A673 (cell line): ENCODE measurements at regions of chr7 and their contacts with region 1.

Region 1: GRCh38 chr7:116588641-116589594 is 64.1 kb downstream of the CAV1 start:
- DNase-seq: peak; percentile 90
- H3K4me3 ChIP-seq: no peak overlapping the region
- H3K27ac ChIP-seq: peak overlapping the region; percentile 55
- H3K4me1 ChIP-seq: peaks cover 71% of the 10 kb centered on the region
- H3K27me3 ChIP-seq: no peaks in the 10 kb centered on the region
- CTCF ChIP-seq: peak; percentile 73

Region 2: GRCh38 chr7:116173051-116174028 is 415.6 kb before region 1 on chr7:
- CTCF ChIA-PET with region 1: interaction called, 5 read pairs
- POLR2A ChIA-PET with region 1: no interaction called
- intact Hi-C with region 1: loop called (anchors 2 kb)
- DNase-seq: peak; percentile 84
- H3K4me3 ChIP-seq: no peak overlapping the region
- H3K27ac ChIP-seq: peak overlapping the region; percentile 3
- H3K4me1 ChIP-seq: peaks cover 4% of the 10 kb centered on the region
- H3K27me3 ChIP-seq: no peaks in the 10 kb centered on the region
- CTCF ChIP-seq: peak; percentile 68

Region 3: DNA sequence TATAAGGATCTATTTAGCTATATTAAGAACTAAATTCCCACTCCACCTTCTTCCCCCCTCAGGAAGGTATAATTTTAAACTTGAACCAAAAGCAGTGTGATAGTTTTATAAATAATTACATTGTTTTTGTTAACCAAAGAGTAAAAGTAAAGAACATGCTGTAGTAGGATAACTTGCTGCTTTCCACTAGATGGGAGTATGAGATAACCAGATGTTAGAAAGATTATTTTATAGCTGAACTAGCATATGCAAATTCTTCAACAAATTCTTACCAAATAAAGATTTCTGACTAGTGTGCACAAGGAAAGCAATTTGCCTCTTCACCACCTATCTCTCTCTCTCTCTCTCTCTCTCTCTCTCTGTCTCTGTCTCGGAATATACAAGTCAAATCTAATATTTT is 346.7 kb before region 1 on chr7:
- CTCF ChIA-PET with region 1: interaction called, 11 read pairs
- POLR2A ChIA-PET with region 1: no interaction called
- intact Hi-C with region 1: loop called (anchors 2 kb)
- DNase-seq: peak; percentile 52
- H3K4me3 ChIP-seq: no peak overlapping the region
- H3K27ac ChIP-seq: peak overlapping the region; percentile 87
- H3K4me1 ChIP-seq: peaks cover 47% of the 10 kb centered on the region
- H3K27me3 ChIP-seq: no peaks in the 10 kb centered on the region
- CTCF ChIP-seq: peak; percentile 45; the same call in 1 of the 2 replicates

Region 4: DNA sequence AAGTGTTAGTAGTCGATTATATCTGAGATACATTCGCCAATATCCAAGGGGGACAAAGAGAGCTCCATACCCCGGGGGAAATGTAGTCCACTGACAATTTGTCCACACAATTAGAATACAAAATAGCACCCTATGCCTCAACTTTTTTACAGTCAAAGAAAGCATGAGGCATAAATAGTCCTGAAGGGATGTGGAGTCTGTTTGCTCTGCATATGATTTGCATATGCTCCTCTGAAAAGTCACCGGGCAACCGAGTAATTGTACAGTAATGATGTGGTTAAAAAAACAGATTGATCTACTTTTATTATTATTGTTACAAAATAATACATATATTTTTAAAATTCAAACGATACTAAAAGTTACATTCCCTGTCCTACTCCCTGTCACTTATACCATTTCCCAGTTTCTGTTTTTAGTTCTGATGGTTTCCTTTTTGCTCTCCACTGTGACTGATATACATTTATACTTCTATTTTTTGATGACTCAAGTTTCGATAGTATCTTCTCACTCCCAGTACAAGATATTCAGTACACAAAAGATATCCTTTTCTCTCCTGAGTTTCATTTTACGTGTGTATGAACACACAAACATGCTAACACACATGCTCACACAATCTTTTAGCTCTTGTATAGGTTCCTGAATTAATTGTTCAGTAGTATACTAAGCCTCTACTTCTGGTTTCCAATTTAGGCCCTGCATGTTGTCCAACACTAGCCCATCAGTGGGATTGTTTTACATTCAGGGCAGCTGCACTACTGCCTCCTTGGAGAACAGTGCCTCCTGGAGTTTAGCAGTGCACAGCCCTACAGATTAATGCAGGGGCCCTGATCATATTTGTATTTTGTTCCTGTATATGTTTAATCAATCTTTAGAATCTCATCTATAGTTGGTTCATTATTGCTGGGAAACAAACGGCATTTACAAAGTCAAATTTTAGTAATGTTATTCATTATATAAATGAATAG is 247.7 kb before region 1 on chr7:
- CTCF ChIA-PET with region 1: no interaction called
- POLR2A ChIA-PET with region 1: no interaction called
- intact Hi-C with region 1: loop called (anchors 10 kb)
- DNase-seq: peak; percentile 78
- H3K4me3 ChIP-seq: peak overlapping the region; percentile 9
- H3K27ac ChIP-seq: peak overlapping the region; percentile 86
- H3K4me1 ChIP-seq: peaks cover 49% of the 10 kb centered on the region
- H3K27me3 ChIP-seq: no peaks in the 10 kb centered on the region
- CTCF ChIP-seq: peak; percentile 73

Region 5: GRCh38 chr7:116525913-116526861 is 62.7 kb before region 1 on chr7:
- CTCF ChIA-PET with region 1: interaction called, 3 read pairs
- POLR2A ChIA-PET with region 1: interaction called, 4 read pairs
- intact Hi-C with region 1: loop called (anchors 2 kb)
- DNase-seq: peak; percentile 90
- H3K4me3 ChIP-seq: peak overlapping the region; percentile 90
- H3K27ac ChIP-seq: peak overlapping the region; percentile 100
- H3K4me1 ChIP-seq: peaks cover 29% of the 10 kb centered on the region
- H3K27me3 ChIP-seq: no peaks in the 10 kb centered on the region
- CTCF ChIP-seq: peak; percentile 58

Region 6: GRCh38 chr7:116652793-116653192 is 63.9 kb after region 1 on chr7:
- CTCF ChIA-PET with region 1: no interaction called
- POLR2A ChIA-PET with region 1: no interaction called
- intact Hi-C with region 1: no loop called
- DNase-seq: no peak
- H3K4me3 ChIP-seq: no peak overlapping the region
- H3K27ac ChIP-seq: no peak overlapping the region
- H3K4me1 ChIP-seq: no peaks in the 10 kb centered on the region
- H3K27me3 ChIP-seq: no peaks in the 10 kb centered on the region
- CTCF ChIP-seq: no peak

Region 7: GRCh38 chr7:116671681-116672595 is 83.0 kb after region 1 on chr7 and contains the start of gene MET:
- CTCF ChIA-PET with region 1: no interaction called
- POLR2A ChIA-PET with region 1: no interaction called
- intact Hi-C with region 1: loop called (anchors 5 kb)
- DNase-seq: peak; percentile 82
- H3K4me3 ChIP-seq: peak within 1 kb of the TSS; percentile 64
- H3K27ac ChIP-seq: no peak within 1 kb of the TSS
- H3K4me1 ChIP-seq: no peaks in the 10 kb centered on the region
- H3K27me3 ChIP-seq: no peaks in the 10 kb centered on the region
- CTCF ChIP-seq: peak; percentile 69
- total RNA-seq, gene MET: 5.7 and 6.8 TPM in 2 replicates

Region 8: GRCh38 chr7:116809636-116810266 is 220.8 kb after region 1 on chr7:
- CTCF ChIA-PET with region 1: interaction called, 7 read pairs
- POLR2A ChIA-PET with region 1: no interaction called
- intact Hi-C with region 1: loop called (anchors 1 kb)
- DNase-seq: peak; percentile 80
- H3K4me3 ChIP-seq: no peak overlapping the region
- H3K27ac ChIP-seq: no peak overlapping the region
- H3K4me1 ChIP-seq: peaks cover 20% of the 10 kb centered on the region
- H3K27me3 ChIP-seq: no peaks in the 10 kb centered on the region
- CTCF ChIP-seq: peak; percentile 71